Posterior vena cava (tissue), 2 donors: ENCODE measurements at regions of chr20 and their contacts with region 1.

Region 1: GRCh38 chr20:36259177-36260061 is 23.1 kb downstream of the AAR2 start:
- DNase-seq: no peak

Region 2: DNA sequence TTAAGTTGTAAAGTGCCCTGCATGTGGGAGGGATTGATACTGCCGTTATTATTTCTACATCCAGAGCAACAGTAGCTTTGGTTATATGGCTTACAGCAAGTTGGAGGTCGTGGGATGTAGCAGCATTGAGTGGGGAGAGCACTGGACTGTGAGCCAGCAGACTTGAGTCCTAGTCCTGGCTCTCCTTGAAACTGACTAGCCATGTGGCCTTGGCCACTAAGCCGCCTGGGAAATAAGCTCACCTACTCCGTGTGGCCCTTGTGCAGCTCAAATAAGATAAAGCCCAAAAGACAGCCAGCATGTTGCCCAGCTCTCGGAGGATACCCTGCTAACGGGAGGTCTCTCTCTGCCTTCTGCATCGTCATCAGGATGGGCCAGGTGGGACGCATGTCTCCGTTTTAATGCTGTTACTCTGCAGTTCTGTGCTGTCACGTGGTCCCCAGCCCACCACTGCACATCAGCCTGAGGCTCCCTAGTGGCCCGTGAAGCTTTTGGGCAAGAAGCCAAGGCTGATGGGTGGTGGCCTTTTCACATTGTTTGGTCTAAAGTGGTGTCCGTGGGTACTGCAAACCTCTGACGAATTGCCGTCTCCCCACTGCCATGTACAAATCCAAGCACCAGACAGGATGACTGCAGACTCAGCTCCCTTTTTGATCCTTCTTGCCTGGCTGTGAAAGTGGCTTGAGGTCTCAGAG is 97.0 kb before region 1 on chr20:
- intact Hi-C with region 1: no loop called
- DNase-seq: no peak

Region 3: GRCh38 chr20:36214684-36215256 is 44.6 kb before region 1 on chr20:
- intact Hi-C with region 1: no loop called
- DNase-seq: no peak

Region 4: GRCh38 chr20:36408219-36408618 is 148.8 kb after region 1 on chr20:
- intact Hi-C with region 1: loop called in 1 of 2 experiments (anchors 10 kb)
- DNase-seq: no peak